CD8-positive, alpha-beta T cell (primary cell): ENCODE measurements at regions of chr16 and their contacts with region 1.

Region 1: GRCh38 chr16:84970447-84971127 is 40.7 kb downstream of the ZDHHC7 start:
- DNase-seq: peak; percentile 59 to 87 (median 75)
- ATAC-seq: peak; percentile 87
- H3K4me3 ChIP-seq: no peak overlapping the region
- H3K4me3 Mint-ChIP-seq: no peak overlapping the region
- H3K27ac ChIP-seq: no peak overlapping the region
- H3K27ac Mint-ChIP-seq: no peak overlapping the region
- H3K4me1 ChIP-seq: peaks cover 3% of the 10 kb centered on the region
- H3K4me1 Mint-ChIP-seq: peaks cover 4% of the 10 kb centered on the region
- H3K27me3 ChIP-seq: no peaks in the 10 kb centered on the region
- H3K27me3 Mint-ChIP-seq: peaks cover 3% of the 10 kb centered on the region
- CTCF ChIP-seq: peak; percentile 93

Region 2: GRCh38 chr16:84754353-84754856 is 216.2 kb before region 1 on chr16:
- CTCF ChIA-PET with region 1: interaction called, 73 read pairs
- POLR2A ChIA-PET with region 1: no interaction called
- intact Hi-C with region 1: loop called (anchors 1 kb)
- DNase-seq: peak; percentile 42 to 87 (median 63)
- ATAC-seq: peak; percentile 72
- H3K4me3 ChIP-seq: no peak overlapping the region
- H3K4me3 Mint-ChIP-seq: peak overlapping the region; percentile 53
- H3K27ac ChIP-seq: peak overlapping the region in 1 of 2 experiments; percentile 2
- H3K27ac Mint-ChIP-seq: peak overlapping the region; percentile 45
- H3K4me1 ChIP-seq: peaks cover 45% of the 10 kb centered on the region
- H3K4me1 Mint-ChIP-seq: peaks cover 81% of the 10 kb centered on the region
- H3K27me3 ChIP-seq: no peaks in the 10 kb centered on the region
- H3K27me3 Mint-ChIP-seq: no peaks in the 10 kb centered on the region
- CTCF ChIP-seq: peak; percentile 93

Region 3: GRCh38 chr16:84933774-84934631 is 36.6 kb before region 1 on chr16:
- CTCF ChIA-PET with region 1: interaction called, 13 read pairs
- POLR2A ChIA-PET with region 1: no interaction called
- intact Hi-C with region 1: no loop called
- DNase-seq: no peak
- ATAC-seq: no peak
- H3K4me3 ChIP-seq: no peak overlapping the region
- H3K4me3 Mint-ChIP-seq: no peak overlapping the region
- H3K27ac ChIP-seq: no peak overlapping the region
- H3K27ac Mint-ChIP-seq: no peak overlapping the region
- H3K4me1 ChIP-seq: peaks cover 4% of the 10 kb centered on the region
- H3K4me1 Mint-ChIP-seq: peaks cover 3% of the 10 kb centered on the region
- H3K27me3 ChIP-seq: no peaks in the 10 kb centered on the region
- H3K27me3 Mint-ChIP-seq: no peaks in the 10 kb centered on the region
- CTCF ChIP-seq: no peak

Region 4: DNA sequence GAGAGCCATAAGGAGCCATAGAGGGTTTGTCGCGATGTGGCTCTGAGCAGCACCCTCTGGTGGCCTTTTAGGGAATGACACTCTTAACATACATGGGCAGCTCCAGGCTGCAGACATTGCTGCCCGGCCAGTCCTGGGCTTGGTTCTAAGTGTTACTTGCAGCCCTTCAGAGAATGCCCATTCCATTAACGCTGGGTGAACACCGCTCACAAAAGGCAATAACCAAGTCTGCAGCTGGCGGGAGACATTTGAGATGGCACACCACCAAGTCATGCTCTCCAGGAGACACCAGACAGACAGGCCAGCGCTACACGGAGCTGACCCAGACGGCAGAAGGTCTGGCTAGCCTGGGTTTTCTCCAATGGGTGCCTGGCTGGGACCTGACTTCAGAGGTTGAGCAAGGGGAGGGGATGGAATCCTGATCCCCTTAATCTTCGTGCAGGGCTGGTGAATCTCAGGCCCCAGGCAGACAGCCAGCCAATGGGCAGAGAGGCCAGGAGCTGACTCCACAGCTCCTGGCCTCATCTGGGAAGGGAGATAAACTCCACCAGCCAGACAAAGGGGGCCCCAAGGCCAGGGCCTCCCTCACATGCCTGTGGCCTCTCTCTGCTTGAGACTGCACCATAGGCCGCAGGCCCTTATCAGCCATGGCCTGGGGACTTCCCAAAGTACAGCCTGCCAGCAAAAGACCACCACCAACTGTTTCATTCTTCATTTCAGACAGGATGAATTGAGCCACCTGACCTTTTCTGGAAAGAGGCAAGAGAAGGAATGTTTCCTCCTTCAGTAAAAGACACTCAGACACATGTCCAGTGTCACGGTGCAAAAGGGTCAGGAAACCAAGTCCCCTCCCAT is 18.0 kb before region 1 on chr16:
- CTCF ChIA-PET with region 1: interaction called, 66 read pairs
- POLR2A ChIA-PET with region 1: interaction called, 3 read pairs
- intact Hi-C with region 1: loop called in 1 of 2 experiments (anchors 1 kb)
- DNase-seq: peak; percentile 42 to 84 (median 67)
- ATAC-seq: peak; percentile 92
- H3K4me3 ChIP-seq: no peak overlapping the region
- H3K4me3 Mint-ChIP-seq: no peak overlapping the region
- H3K27ac ChIP-seq: no peak overlapping the region
- H3K27ac Mint-ChIP-seq: no peak overlapping the region
- H3K4me1 ChIP-seq: peaks cover 16% of the 10 kb centered on the region
- H3K4me1 Mint-ChIP-seq: peaks cover 9% of the 10 kb centered on the region
- H3K27me3 ChIP-seq: peaks cover 0 to 4% of the 10 kb centered on the region in 2 experiments
- H3K27me3 Mint-ChIP-seq: no peaks in the 10 kb centered on the region
- CTCF ChIP-seq: peak; percentile 93

Region 5: GRCh38 chr16:84995663-84996062 is 25.1 kb after region 1 on chr16:
- CTCF ChIA-PET with region 1: interaction called, 10 read pairs
- POLR2A ChIA-PET with region 1: no interaction called
- intact Hi-C with region 1: no loop called
- DNase-seq: peak in 2 of 9 experiments; percentile 47 to 63
- ATAC-seq: peak; percentile 73
- H3K4me3 ChIP-seq: no peak overlapping the region
- H3K4me3 Mint-ChIP-seq: no peak overlapping the region
- H3K27ac ChIP-seq: no peak overlapping the region
- H3K27ac Mint-ChIP-seq: no peak overlapping the region
- H3K4me1 ChIP-seq: no peaks in the 10 kb centered on the region
- H3K4me1 Mint-ChIP-seq: peaks cover 23% of the 10 kb centered on the region
- H3K27me3 ChIP-seq: no peaks in the 10 kb centered on the region
- H3K27me3 Mint-ChIP-seq: no peaks in the 10 kb centered on the region
- CTCF ChIP-seq: no peak